Activated CD8-positive, alpha-beta memory T cell treated with anti-CD3 and anti-CD28 coated beads, Interleukin-2, amount 10 ng/mL, durations not matched to agents 7 days and 5 days (primary cell): ENCODE measurements at regions of chr5 and their contacts with region 1.

Region 1: DNA sequence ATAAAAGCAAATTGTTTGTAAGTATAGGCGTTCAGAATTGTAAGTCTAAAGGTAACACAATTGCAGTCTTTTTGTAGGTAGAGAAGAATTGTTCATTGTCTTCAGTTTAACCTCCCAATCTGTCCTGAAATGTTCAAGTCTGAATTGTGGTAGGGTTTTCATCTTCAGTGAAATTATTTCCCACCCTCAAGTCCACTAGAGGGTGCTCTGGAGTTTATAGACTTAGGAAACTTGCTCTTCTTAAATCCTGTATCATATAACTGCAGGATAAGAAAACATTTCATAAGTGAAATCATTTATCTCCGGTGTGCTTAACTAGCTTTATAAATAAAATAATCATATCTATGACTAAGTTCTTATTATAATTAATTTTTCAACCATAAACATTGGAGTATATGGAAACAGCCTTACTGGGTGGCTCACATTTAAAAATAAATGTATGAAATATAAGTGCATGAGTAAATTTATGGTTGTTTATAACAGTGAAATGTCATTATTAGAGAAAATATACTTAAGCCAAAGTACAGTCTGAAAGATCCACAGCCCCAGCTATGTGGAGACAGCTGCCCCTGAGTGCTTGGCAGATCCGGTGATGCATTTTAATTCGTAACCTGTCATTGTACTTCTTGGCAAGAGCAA is 182.4 kb upstream of the OTULINL start:
- DNase-seq: no peak
- ATAC-seq: peak; percentile 73
- H3K4me3 Mint-ChIP-seq: no peak overlapping the region
- H3K27ac Mint-ChIP-seq: no peak overlapping the region
- H3K4me1 Mint-ChIP-seq: peaks cover 38% of the 10 kb centered on the region
- H3K27me3 Mint-ChIP-seq: peaks cover 12% of the 10 kb centered on the region

Region 2: DNA sequence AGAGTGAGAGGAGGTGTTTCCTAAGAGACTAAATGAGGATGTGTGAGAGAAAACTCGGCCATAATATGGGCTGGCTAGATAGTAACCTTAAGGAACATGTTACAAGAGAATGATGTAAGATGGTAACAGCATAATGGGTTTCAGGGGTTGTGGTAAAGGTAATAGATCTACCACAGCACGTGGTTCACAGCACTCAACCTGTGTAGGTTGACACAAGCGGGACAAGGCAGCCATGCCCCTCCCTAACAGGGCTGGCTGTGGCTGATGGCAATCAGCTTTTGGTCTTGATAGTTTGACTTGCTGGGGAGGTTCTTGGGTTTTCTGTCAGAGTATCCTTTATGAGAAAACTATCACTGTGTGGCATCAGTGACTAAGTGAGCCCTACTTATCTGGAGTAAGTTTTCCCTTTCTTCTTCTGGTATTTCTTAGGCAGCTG is 117.4 kb before region 1 on chr5:
- CTCF ChIA-PET with region 1: no interaction called
- DNase-seq: peak; percentile 45
- ATAC-seq: peak; percentile 53
- H3K4me3 Mint-ChIP-seq: no peak overlapping the region
- H3K27ac Mint-ChIP-seq: no peak overlapping the region
- H3K4me1 Mint-ChIP-seq: peaks cover 2% of the 10 kb centered on the region
- H3K27me3 Mint-ChIP-seq: peaks cover 26% of the 10 kb centered on the region

Region 3: GRCh38 chr5:14415024-14415697 is 16.0 kb after region 1 on chr5:
- CTCF ChIA-PET with region 1: interaction called, 12 read pairs
- DNase-seq: peak; percentile 78
- ATAC-seq: peak; percentile 67
- H3K4me3 Mint-ChIP-seq: peak overlapping the region; percentile 55
- H3K27ac Mint-ChIP-seq: peak overlapping the region; percentile 88
- H3K4me1 Mint-ChIP-seq: peaks cover 45% of the 10 kb centered on the region
- H3K27me3 Mint-ChIP-seq: peaks cover 4% of the 10 kb centered on the region

Region 4: DNA sequence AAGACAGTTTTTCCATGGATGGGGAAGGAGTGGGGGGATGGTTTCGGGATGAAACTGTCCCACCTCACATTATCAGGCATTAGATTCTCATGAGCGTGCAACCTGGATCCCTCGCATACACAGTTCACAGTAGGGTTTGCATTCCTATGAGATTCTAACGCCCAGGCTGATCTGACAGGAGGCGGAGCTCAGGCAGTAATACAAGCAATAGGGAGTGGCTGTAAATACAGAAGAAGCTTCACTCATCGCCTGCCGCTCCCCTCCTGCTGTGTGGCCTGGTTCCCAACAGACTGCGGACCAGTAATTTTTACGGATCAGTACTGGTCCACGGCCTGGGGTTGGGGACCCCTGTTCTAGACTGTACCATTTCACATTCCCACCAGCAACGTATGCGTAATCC is 114.1 kb after region 1 on chr5:
- CTCF ChIA-PET with region 1: no interaction called
- DNase-seq: no peak
- ATAC-seq: no peak
- H3K4me3 Mint-ChIP-seq: no peak overlapping the region
- H3K27ac Mint-ChIP-seq: no peak overlapping the region
- H3K4me1 Mint-ChIP-seq: no peaks in the 10 kb centered on the region
- H3K27me3 Mint-ChIP-seq: peaks cover 8% of the 10 kb centered on the region